ENCODE measurements at regions of chr9 and their contacts with region 1.

Region 1: GRCh38 chr9:130997925-130998596 is 10.9 kb upstream of the LAMC3 start:
- DNase-seq: peak; percentile 72
- H3K4me3 ChIP-seq: no peak overlapping the region
- H3K27ac ChIP-seq: no peak overlapping the region
- H3K4me1 ChIP-seq: no peaks in the 10 kb centered on the region
- H3K27me3 ChIP-seq: peaks cover 36% of the 10 kb centered on the region
- CTCF ChIP-seq: peak; percentile 55 to 80 (median 68)
- EP300 ChIP-seq: no peak
- POLR2A ChIP-seq: no peak

Region 2: GRCh38 chr9:130590305-130590704 is 407.8 kb before region 1 on chr9:
- in situ Hi-C with region 1: no loop called
- intact Hi-C with region 1: no loop called
- DNase-seq: no peak
- H3K4me3 ChIP-seq: no peak overlapping the region
- H3K27ac ChIP-seq: no peak overlapping the region
- H3K4me1 ChIP-seq: peaks cover 0 to 4% (median 0%) of the 10 kb centered on the region in 4 donors
- H3K27me3 ChIP-seq: no peaks in the 10 kb centered on the region
- CTCF ChIP-seq: no peak
- EP300 ChIP-seq: no peak
- POLR2A ChIP-seq: no peak

Region 3: DNA sequence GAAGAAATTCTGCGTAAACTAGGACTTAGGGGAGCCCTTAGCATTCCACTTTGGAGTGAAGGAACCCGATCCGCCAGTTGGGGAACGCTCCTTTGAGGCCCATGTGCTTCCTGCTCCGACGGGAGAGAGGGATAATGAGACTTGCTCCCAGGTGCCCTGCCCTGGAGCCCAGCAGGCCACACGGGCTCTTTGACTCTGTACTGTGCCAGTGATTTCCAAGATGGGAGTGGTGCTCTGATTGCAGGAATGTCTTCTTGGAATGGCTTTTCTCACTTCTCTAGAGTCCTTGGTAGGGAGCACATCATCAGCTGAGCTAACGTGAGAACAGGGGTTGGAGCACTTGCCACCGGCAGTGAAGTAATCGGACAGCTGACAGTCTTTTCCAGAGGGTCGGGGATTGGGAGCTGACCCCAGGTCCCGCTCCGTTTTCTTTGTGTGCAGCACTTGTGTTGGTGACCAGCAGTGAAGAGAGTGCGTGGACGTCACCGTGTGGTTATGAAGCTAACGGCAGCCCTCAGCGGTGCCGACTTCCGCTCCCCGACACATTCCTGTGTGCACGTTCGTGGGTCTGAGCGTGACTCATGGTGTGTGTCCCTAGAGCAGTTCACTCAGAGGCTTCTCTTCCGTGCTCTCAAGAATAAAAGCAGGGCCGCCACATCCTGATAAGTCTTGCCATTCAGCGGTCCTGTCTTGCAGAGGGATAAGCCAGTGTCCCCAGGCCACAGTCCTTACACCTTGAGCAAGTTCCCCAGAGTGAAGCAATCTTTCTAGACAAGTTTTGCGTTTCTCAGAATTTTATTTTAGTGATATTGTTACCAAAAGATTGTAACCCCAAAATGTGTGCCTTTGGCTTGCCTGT is 137.4 kb before region 1 on chr9:
- in situ Hi-C with region 1: no loop called
- intact Hi-C with region 1: no loop called
- DNase-seq: peak; percentile 69
- H3K4me3 ChIP-seq: no peak overlapping the region
- H3K27ac ChIP-seq: peak overlapping the region; percentile 54 to 83 (median 78)
- H3K4me1 ChIP-seq: peaks cover 4 to 55% (median 32%) of the 10 kb centered on the region in 4 donors
- H3K27me3 ChIP-seq: no peaks in the 10 kb centered on the region
- CTCF ChIP-seq: peak in 2 of 5 experiments; percentile 17 to 28
- EP300 ChIP-seq: no peak
- POLR2A ChIP-seq: peak; percentile 9

Region 4: DNA sequence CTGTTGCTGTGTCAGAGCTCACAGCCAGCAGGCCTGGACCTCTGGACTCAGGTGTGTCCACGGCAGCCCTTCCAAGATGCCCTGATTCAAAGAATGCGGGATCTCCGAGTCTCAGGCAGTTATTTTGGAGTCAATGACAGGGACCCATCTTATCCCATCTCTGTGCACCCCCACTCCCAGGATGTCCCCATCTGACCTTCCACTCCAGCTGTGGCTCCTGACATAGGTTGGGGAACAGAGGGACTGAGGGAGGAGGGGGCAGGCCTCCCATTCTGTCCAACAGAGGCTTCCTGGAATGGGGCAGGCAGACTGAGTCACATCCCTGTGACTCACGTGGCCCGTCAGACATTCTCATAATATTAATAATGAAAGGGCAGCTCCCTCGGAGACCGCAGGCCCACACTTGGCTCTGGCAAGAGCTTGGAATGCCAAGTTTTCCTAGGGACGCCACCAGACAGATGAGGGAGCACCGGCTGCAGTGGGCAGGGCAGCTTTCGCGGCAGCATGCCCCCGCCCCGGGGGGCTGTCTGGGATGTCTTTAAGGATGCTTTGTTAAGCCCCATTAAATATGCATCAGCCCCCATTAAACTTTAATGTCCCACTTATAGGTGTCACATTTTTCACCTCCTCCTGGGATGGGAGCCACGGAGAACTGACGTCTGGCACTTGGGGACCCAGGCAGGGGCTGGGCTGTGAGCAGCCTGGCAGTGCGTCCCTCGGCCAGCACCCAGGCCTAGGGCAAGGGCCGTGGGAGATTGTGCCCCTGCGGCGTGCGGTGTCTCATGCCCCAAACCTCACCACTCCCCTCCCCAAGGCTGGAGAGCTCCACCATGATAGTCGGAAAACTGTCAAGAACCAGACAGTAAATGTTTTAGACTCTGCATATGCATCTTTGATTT is 35.4 kb before region 1 on chr9:
- in situ Hi-C with region 1: no loop called
- intact Hi-C with region 1: no loop called
- DNase-seq: no peak
- H3K4me3 ChIP-seq: no peak overlapping the region
- H3K27ac ChIP-seq: no peak overlapping the region
- H3K4me1 ChIP-seq: peaks cover 0 to 7% (median 2%) of the 10 kb centered on the region in 4 donors
- H3K27me3 ChIP-seq: no peaks in the 10 kb centered on the region
- CTCF ChIP-seq: no peak
- EP300 ChIP-seq: no peak
- POLR2A ChIP-seq: no peak

Region 5: GRCh38 chr9:131046581-131047202 is 48.6 kb after region 1 on chr9:
- in situ Hi-C with region 1: no loop called
- intact Hi-C with region 1: loop called (anchors 1 kb)
- DNase-seq: peak; percentile 62
- H3K4me3 ChIP-seq: no peak overlapping the region
- H3K27ac ChIP-seq: no peak overlapping the region
- H3K4me1 ChIP-seq: peaks cover 0 to 5% (median 2%) of the 10 kb centered on the region in 4 donors
- H3K27me3 ChIP-seq: peaks cover 12% of the 10 kb centered on the region
- CTCF ChIP-seq: peak; percentile 80 to 92 (median 87)
- EP300 ChIP-seq: no peak
- POLR2A ChIP-seq: no peak

Measured in transverse colon (tissue), 4 donors.